ENCODE measurements at regions of chr1 and their contacts with region 1.

Region 1: GRCh38 chr1:30329802-30330557 is 393.4 kb downstream of the MATN1 start:
- DNase-seq: no peak
- H3K4me3 ChIP-seq: no peak overlapping the region
- H3K27ac ChIP-seq: no peak overlapping the region
- H3K4me1 ChIP-seq: no peaks in the 10 kb centered on the region
- H3K27me3 ChIP-seq: no peaks in the 10 kb centered on the region
- CTCF ChIP-seq: no peak
- EP300 ChIP-seq: no peak
- POLR2A ChIP-seq: no peak

Region 2: GRCh38 chr1:30268923-30269666 is 60.9 kb before region 1 on chr1:
- intact Hi-C with region 1: no loop called
- DNase-seq: no peak
- H3K4me3 ChIP-seq: no peak overlapping the region
- H3K27ac ChIP-seq: no peak overlapping the region
- H3K4me1 ChIP-seq: no peaks in the 10 kb centered on the region
- H3K27me3 ChIP-seq: no peaks in the 10 kb centered on the region
- CTCF ChIP-seq: no peak
- EP300 ChIP-seq: no peak
- POLR2A ChIP-seq: no peak

Region 3: GRCh38 chr1:31372961-31373896 is 1043.2 kb after region 1 on chr1 and contains the start of gene FABP3:
- intact Hi-C with region 1: no loop called
- DNase-seq: peak; percentile 79 to 88 (median 84)
- H3K4me3 ChIP-seq: peak within 1 kb of the TSS; percentile 43
- H3K27ac ChIP-seq: peak within 1 kb of the TSS; percentile 72 to 89
- H3K4me1 ChIP-seq: peaks cover 34% of the 10 kb centered on the region
- H3K27me3 ChIP-seq: no peaks in the 10 kb centered on the region
- CTCF ChIP-seq: no peak
- EP300 ChIP-seq: no peak
- POLR2A ChIP-seq: peak; percentile 28
- total RNA-seq, gene FABP3: 3.3 to 39.3 (median 24.2) TPM

Region 4: GRCh38 chr1:32031578-32032274 is 1701.7 kb after region 1 on chr1:
- intact Hi-C with region 1: loop called in 1 of 4 experiments (anchors 10 kb)
- DNase-seq: no peak
- H3K4me3 ChIP-seq: no peak overlapping the region
- H3K27ac ChIP-seq: no peak overlapping the region
- H3K4me1 ChIP-seq: peaks cover 2% of the 10 kb centered on the region
- H3K27me3 ChIP-seq: no peaks in the 10 kb centered on the region
- CTCF ChIP-seq: no peak
- EP300 ChIP-seq: no peak
- POLR2A ChIP-seq: no peak